Activated CD8-positive, alpha-beta T cell treated with anti-CD3 and anti-CD28 coated beads for 36 hours (primary cell): ENCODE measurements at regions of chr6 and their contacts with region 1.

Region 1: DNA sequence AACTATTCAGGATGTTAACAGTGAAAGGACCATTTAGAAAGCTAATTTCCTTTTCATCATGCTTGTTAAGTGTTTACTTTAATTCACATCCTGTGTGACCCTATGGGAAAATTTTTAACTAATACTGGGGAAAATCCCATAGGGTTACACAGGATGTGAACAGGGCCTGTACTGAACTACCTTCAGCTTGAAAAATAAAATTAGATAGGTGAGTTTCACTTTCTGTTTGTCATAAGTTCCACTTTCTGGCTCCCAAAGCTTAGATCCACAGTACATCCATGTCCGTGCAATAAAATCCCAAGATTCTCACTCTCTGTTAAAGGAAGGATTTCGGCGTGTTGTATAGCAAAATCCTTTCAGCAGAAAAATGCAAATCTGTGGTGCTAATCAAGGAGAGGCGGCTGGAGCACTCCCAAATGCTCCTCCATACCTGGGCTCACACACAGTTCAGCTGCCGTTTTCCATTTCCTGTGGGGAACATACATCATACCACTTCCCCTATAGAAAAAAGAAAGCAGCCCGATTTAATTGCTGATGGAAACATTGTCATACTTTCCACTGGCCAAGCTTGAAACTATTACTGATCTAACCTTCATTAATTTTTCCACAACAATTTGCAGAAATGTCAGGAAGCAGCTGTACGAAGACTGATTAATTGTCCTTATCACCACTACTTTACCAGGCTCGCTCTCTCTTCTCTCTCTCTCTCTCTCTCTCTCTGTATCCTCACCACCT is 125.2 kb downstream of the HIVEP2 start:
- DNase-seq: peak; percentile 71
- ATAC-seq: peak; percentile 63
- H3K4me3 Mint-ChIP-seq: peak overlapping the region; percentile 85
- H3K27ac Mint-ChIP-seq: peak overlapping the region; percentile 98
- H3K4me1 Mint-ChIP-seq: peaks cover 80% of the 10 kb centered on the region
- H3K27me3 Mint-ChIP-seq: no peaks in the 10 kb centered on the region
- CTCF ChIP-seq: no peak

Region 2: DNA sequence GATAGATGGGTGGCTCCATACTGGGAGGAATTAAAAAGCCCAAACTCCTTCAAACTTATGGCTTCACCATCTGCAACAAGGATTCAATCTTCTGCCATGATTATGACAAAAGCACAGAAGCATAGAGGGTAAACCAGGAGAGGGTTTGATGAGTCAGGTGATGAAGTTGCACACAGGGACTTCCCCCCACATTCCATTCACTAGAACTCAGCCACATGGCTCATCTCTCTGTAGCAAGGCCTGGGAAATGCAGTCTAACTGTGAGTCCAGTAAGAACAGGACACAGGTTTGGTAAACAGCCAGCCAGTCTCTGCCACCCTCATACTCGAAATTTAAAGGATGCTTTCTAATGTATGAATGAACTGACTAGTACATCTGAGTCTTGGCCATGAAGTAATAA is 17.6 kb before region 1 on chr6:
- CTCF ChIA-PET with region 1: interaction called, 10 read pairs
- POLR2A ChIA-PET with region 1: interaction called, 11 read pairs
- intact Hi-C with region 1: no loop called
- DNase-seq: peak; percentile 68
- ATAC-seq: peak; percentile 91
- H3K4me3 Mint-ChIP-seq: peak overlapping the region; percentile 20
- H3K27ac Mint-ChIP-seq: peak overlapping the region; percentile 93
- H3K4me1 Mint-ChIP-seq: peaks cover 92% of the 10 kb centered on the region
- H3K27me3 Mint-ChIP-seq: no peaks in the 10 kb centered on the region
- CTCF ChIP-seq: no peak